ENCODE measurements at regions of chr6 and their contacts with region 1.

Region 1: DNA sequence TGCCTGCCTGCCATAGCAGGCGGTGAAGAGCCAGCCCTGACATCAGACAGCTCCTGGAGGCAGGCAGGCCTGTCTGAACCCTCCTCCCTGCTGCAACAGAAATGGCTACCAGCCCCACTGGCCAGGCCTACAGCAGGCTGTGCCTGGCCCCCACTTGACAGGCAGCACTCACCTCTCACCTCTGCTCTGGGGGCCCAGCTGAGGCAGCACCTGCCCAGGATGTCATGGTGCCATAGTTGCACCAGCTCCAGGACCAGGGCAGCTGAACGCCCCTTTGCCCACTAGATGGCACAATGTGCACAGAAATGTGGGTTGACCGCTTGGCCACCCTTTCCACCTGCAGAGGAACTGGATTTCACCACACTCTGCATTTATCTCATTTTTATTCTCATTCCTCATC is 30.6 kb downstream of the MRPL14 start:
- DNase-seq: peak; percentile 69 to 85 (median 79)
- H3K4me3 ChIP-seq: no peak overlapping the region
- H3K27ac ChIP-seq: no peak overlapping the region
- H3K4me1 ChIP-seq: peaks cover 0 to 10% (median 8%) of the 10 kb centered on the region in 4 experiments
- H3K27me3 ChIP-seq: no peaks in the 10 kb centered on the region

Region 2: DNA sequence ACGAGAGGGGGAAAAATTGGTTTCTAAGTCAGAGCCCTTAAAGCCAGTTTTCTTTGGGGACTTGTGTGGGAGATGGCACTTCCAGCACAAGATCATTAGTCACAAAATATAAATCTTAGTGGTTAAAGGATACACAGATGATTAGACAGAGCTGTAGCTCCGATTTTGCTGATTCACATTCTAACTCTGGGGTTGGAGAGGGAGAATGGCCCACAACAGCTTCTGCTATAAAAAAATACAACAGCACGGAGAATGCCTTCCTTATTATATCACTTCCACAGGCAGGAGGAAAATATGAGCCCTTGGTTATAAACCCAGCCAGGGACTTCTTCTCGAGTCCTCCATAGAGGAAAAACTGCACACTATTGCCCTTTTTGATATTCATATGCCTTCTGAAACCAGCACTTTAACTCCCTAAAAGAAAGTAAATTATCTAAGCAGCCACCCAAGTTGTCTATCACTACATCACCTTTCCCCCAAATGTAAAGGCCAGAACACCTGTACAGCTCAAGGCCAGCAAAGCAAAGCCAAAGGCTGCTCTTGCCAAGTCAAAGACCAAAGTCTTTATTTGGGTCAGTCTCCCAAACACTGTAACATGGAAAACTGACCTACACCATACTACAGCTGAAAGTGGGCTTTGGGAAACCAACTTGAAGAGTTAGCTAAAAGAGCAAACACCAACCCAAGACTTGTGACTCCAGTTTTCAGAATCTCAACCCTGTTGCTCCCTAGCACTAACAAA is 20.2 kb after region 1 on chr6:
- CTCF ChIA-PET with region 1: interaction called, 128 read pairs
- POLR2A ChIA-PET with region 1: no interaction called
- DNase-seq: no peak
- H3K4me3 ChIP-seq: no peak overlapping the region
- H3K27ac ChIP-seq: no peak overlapping the region
- H3K4me1 ChIP-seq: no peaks in the 10 kb centered on the region
- H3K27me3 ChIP-seq: peaks cover 0 to 18% (median 6%) of the 10 kb centered on the region in 5 experiments

Region 3: GRCh38 chr6:44151348-44152108 is 54.9 kb after region 1 on chr6:
- CTCF ChIA-PET with region 1: interaction called, 51 read pairs
- POLR2A ChIA-PET with region 1: interaction called, 3 read pairs
- DNase-seq: peak; percentile 75 to 86 (median 81)
- H3K4me3 ChIP-seq: no peak overlapping the region
- H3K27ac ChIP-seq: no peak overlapping the region
- H3K4me1 ChIP-seq: peaks cover 0 to 6% (median 2%) of the 10 kb centered on the region in 4 experiments
- H3K27me3 ChIP-seq: peaks cover 0 to 4% (median 0%) of the 10 kb centered on the region in 5 experiments

Region 4: GRCh38 chr6:44237813-44238433 is 141.3 kb after region 1 on chr6:
- CTCF ChIA-PET with region 1: interaction called, 30 read pairs
- POLR2A ChIA-PET with region 1: interaction called, 3 read pairs
- DNase-seq: peak; percentile 64 to 87 (median 84)
- H3K4me3 ChIP-seq: peak overlapping the region; percentile 39 to 82 (median 64)
- H3K27ac ChIP-seq: peak overlapping the region in 1 of 2 experiments; percentile 86
- H3K4me1 ChIP-seq: peaks cover 0 to 38% (median 32%) of the 10 kb centered on the region in 4 experiments
- H3K27me3 ChIP-seq: no peaks in the 10 kb centered on the region

Region 5: DNA sequence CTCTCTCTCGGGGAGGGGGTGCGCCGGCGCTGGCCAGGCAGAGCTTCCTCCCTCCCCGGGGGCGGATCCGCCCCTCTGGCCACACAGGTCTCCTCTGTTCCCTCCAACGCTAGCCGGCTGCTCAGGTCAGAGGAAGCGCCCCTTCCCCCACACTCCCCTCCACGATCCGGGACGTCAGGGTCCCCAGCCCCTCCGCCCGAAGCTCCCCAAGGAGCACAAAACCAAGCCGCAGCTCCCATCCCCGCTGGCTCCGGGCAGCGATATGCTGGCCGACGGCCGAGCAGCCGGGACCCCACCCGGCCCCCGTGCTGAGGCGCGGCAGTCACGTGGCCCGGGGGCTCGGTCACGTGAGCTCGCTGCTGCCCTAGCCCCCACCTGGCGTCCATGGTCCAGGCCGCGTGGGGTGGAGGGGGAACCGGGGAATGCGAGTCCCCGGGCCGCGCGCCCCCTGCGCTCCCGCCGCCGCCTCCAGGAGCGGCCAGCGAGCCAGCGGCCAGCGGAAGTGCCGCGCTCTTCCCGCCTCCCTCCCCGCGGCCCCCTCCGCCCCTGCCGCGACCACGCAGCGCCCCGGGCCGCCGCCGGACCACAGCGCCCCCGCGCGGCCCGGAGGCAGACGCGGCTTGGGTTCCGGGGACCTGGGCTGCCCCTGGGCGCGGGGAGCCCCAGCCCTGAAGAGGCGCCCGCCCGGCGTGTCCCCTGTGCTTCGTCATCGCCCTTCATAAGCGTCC is 160.6 kb after region 1 on chr6 and contains the start of gene SLC35B2:
- CTCF ChIA-PET with region 1: interaction called, 29 read pairs
- POLR2A ChIA-PET with region 1: no interaction called
- DNase-seq: peak; percentile 50 to 77 (median 69)
- H3K4me3 ChIP-seq: peak within 1 kb of the TSS; percentile 63 to 89 (median 83)
- H3K27ac ChIP-seq: peak within 1 kb of the TSS; percentile 46 to 73
- H3K4me1 ChIP-seq: peaks cover 4 to 42% (median 29%) of the 10 kb centered on the region in 4 experiments
- H3K27me3 ChIP-seq: no peaks in the 10 kb centered on the region

Region 6: DNA sequence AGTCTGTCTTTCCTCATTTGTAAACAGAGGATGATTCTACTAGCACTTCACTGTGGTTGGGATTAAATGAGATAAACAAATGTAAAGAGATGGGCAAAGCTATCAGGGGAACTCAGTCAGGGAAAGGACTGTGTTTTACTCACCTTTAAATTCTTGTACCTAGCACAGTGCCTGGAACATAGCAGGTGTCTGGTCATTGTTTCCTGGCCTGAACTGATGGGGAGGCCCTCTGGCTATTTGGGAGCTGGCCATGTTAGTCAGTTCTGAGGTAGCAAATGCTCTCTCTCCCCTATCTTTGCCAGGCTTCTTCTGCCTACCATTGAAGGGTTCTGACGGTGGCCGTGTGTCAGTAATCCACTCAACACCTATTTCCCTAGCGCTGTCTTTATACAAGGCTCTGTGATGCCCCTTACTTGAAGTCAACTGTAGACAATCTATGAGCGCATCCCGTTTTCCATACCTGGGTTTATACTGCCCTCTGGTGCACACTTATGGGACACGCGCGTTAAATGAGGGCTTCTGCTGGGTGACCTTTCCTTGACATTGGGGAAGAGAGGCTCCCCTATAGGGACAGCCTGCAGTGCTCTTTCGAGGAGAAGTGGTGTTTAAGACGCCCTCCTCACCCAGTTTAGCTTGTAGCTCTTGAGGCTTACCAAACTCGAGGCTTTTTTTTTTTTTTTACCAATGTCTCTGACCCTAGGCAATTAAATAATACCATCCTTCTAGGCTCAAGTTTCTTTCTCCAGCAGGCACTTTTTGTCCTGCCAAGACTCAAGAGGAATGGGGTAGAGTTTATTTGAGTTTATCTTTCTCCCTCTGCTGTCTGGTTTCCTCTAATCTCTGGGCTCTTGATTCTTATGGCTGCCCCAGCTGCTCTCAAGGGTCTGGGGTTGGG is 241.9 kb after region 1 on chr6:
- CTCF ChIA-PET with region 1: interaction called, 44 read pairs
- POLR2A ChIA-PET with region 1: no interaction called
- DNase-seq: peak; percentile 66 to 81 (median 74)
- H3K4me3 ChIP-seq: no peak overlapping the region
- H3K27ac ChIP-seq: no peak overlapping the region
- H3K4me1 ChIP-seq: peaks cover 0 to 16% (median 11%) of the 10 kb centered on the region in 4 experiments
- H3K27me3 ChIP-seq: peaks cover 0 to 16% (median 13%) of the 10 kb centered on the region in 5 experiments